Activated B cell treated with CpG ODN at 0.5 μM for 24 hours (primary cell): ENCODE measurements at regions of chr12 and their contacts with region 1.

Region 1: DNA sequence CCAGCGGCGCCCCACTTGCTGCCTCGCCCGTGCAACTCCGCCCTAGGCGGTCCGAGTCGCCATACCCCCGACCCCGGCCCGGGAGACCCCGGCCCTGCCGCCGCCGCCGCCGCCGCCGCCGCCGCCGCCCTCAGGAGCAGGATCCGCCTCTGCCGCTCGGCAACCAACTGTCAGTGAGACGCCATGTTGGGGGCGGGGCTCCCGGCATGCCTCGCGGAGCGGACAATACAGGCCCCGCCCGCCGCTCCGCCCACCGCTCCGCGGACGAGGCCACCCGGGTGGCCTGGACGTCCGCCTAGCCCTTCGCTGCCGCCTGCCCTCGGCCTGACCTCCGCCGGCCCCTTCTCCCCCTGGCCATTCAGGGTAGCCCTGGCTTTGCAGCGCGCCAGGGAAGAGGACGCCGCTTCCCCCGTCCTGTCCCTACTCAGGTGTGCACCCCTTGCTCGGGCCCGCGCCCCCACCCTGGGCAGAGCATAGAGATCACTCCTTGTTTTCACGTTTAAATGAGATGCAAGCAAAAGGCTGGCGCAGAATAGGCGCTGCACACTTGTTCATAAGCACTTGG is at the start of gene HECTD4:
- DNase-seq: peak; percentile 96
- ATAC-seq: peak; percentile 96
- H3K4me3 Mint-ChIP-seq: peak within 1 kb of the TSS; percentile 97
- H3K27ac Mint-ChIP-seq: peak within 1 kb of the TSS; percentile 88
- H3K4me1 Mint-ChIP-seq: peaks cover 32% of the 10 kb centered on the region
- H3K27me3 Mint-ChIP-seq: no peaks in the 10 kb centered on the region
- CTCF ChIP-seq: no peak
- total RNA-seq, gene HECTD4: 76.3 and 98.8 TPM in 2 replicates

Region 2: DNA sequence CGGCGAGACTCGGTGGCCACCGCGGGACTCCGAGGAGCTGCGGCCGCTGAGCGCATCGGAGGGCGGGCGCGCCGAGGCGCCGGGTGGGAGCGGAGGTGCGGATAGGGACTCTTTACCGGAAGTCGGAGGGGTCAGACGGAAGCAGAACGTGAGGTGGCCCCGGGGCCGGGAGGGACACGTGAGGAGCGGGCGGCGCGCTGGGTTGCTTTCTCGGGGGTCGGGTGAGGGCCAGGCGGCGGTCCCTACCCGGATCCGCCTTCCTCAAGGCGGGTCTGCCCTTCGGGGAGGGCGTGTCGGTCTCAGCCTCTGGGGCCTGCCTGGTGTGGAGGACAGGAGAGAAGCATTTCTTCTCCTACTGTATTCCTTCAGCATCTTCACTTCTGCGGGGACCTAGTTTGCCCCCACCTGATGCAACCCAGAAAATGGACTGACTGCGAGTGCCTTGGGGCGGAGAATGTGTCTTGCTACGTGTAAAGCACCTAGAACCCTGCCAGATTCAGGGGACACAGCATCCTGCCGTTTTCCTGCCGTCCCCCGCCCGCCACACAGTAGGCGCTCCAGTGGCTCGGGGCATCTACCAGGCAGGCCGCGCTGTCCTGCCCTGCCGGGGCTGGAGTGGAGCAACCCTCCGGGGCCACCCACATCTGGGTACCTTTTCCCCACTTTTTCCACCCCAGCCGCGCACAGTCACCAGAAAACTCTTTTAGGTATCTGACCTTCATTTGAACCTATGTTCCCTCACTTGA is 782.7 kb before region 1 on chr12:
- CTCF ChIA-PET with region 1: no interaction called
- POLR2A ChIA-PET with region 1: interaction called, 5 read pairs
- intact Hi-C with region 1: loop called (anchors 10 kb)
- DNase-seq: peak; percentile 93
- ATAC-seq: peak; percentile 81
- H3K4me3 Mint-ChIP-seq: peak overlapping the region; percentile 86
- H3K27ac Mint-ChIP-seq: peak overlapping the region; percentile 88
- H3K4me1 Mint-ChIP-seq: peaks cover 29% of the 10 kb centered on the region
- H3K27me3 Mint-ChIP-seq: no peaks in the 10 kb centered on the region
- CTCF ChIP-seq: no peak

Region 3: DNA sequence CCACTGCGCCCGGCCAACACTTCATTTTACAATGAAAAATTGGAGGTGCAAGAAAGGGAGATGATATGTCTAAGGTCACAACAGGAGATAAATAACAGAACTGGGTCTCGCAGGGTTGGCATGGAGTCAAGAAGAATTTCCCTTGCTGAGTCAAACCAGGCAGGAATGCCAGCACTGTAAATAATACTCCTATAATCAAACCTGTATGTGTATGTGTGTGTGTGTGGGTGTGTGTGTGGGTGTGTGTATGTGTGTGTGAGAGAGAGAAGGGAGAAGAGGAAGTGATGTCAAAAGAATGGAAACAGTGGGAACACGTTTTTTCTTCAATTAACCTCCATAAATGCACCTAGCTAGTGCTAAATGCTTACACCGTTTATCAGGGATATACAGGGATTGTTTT is 439.8 kb before region 1 on chr12:
- CTCF ChIA-PET with region 1: interaction called, 3 read pairs
- POLR2A ChIA-PET with region 1: no interaction called
- intact Hi-C with region 1: loop called (anchors 1 kb)
- DNase-seq: no peak
- ATAC-seq: no peak
- H3K4me3 Mint-ChIP-seq: no peak overlapping the region
- H3K27ac Mint-ChIP-seq: no peak overlapping the region
- H3K4me1 Mint-ChIP-seq: peaks cover 2% of the 10 kb centered on the region
- H3K27me3 Mint-ChIP-seq: no peaks in the 10 kb centered on the region
- CTCF ChIP-seq: no peak

Region 4: GRCh38 chr12:112198120-112198733 is 184.1 kb before region 1 on chr12:
- CTCF ChIA-PET with region 1: interaction called, 99 read pairs
- POLR2A ChIA-PET with region 1: interaction called, 6 read pairs
- intact Hi-C with region 1: loop called (anchors 1 kb)
- DNase-seq: peak; percentile 24
- ATAC-seq: peak; percentile 84
- H3K4me3 Mint-ChIP-seq: no peak overlapping the region
- H3K27ac Mint-ChIP-seq: no peak overlapping the region
- H3K4me1 Mint-ChIP-seq: no peaks in the 10 kb centered on the region
- H3K27me3 Mint-ChIP-seq: no peaks in the 10 kb centered on the region
- CTCF ChIP-seq: no peak

Region 5: DNA sequence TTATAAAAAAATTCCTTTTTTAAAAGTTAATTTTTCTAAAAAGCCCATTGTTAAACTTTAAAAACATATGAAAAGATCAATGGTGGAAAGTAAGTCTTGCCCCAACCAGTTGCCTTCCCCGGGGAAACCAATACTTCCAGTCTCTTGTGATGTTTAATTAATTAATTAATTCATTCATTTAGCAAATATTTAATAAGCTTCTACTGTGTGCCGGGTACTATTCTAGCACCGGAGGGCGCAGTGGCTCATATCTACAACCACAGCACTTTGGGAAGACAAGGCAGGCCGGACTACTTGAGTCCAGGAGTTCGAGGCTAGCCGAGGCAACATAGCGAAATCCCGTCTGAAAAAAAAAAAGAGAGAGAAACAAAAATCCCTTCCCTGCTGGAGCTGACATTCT is 87.5 kb before region 1 on chr12:
- CTCF ChIA-PET with region 1: interaction called, 13 read pairs
- POLR2A ChIA-PET with region 1: no interaction called
- intact Hi-C with region 1: loop called (anchors 1 kb)
- DNase-seq: no peak
- ATAC-seq: no peak
- H3K4me3 Mint-ChIP-seq: no peak overlapping the region
- H3K27ac Mint-ChIP-seq: no peak overlapping the region
- H3K4me1 Mint-ChIP-seq: no peaks in the 10 kb centered on the region
- H3K27me3 Mint-ChIP-seq: no peaks in the 10 kb centered on the region
- CTCF ChIP-seq: no peak

Region 6: GRCh38 chr12:112409064-112409905 is 27.0 kb after region 1 on chr12 and contains the start of gene RPL6:
- CTCF ChIA-PET with region 1: interaction called, 7 read pairs
- POLR2A ChIA-PET with region 1: no interaction called
- intact Hi-C with region 1: loop called (anchors 1 kb)
- DNase-seq: peak; percentile 70
- ATAC-seq: peak; percentile 91
- H3K4me3 Mint-ChIP-seq: peak within 1 kb of the TSS; percentile 100
- H3K27ac Mint-ChIP-seq: peak within 1 kb of the TSS; percentile 99
- H3K4me1 Mint-ChIP-seq: peaks cover 36% of the 10 kb centered on the region
- H3K27me3 Mint-ChIP-seq: no peaks in the 10 kb centered on the region
- CTCF ChIP-seq: no peak
- total RNA-seq, gene RPL6: 2,197 and 2,546 TPM in 2 replicates

Region 7: GRCh38 chr12:112788205-112788604 is 405.9 kb after region 1 on chr12:
- CTCF ChIA-PET with region 1: no interaction called
- POLR2A ChIA-PET with region 1: no interaction called
- intact Hi-C with region 1: no loop called
- DNase-seq: no peak
- ATAC-seq: no peak
- H3K4me3 Mint-ChIP-seq: no peak overlapping the region
- H3K27ac Mint-ChIP-seq: no peak overlapping the region
- H3K4me1 Mint-ChIP-seq: no peaks in the 10 kb centered on the region
- H3K27me3 Mint-ChIP-seq: peaks cover 40% of the 10 kb centered on the region
- CTCF ChIP-seq: no peak